Activated CD4-positive, alpha-beta memory T cell treated with anti-CD3 and anti-CD28 coated beads for 36 hours (primary cell): ENCODE measurements at regions of chr5 and their contacts with region 1.

Region 1: DNA sequence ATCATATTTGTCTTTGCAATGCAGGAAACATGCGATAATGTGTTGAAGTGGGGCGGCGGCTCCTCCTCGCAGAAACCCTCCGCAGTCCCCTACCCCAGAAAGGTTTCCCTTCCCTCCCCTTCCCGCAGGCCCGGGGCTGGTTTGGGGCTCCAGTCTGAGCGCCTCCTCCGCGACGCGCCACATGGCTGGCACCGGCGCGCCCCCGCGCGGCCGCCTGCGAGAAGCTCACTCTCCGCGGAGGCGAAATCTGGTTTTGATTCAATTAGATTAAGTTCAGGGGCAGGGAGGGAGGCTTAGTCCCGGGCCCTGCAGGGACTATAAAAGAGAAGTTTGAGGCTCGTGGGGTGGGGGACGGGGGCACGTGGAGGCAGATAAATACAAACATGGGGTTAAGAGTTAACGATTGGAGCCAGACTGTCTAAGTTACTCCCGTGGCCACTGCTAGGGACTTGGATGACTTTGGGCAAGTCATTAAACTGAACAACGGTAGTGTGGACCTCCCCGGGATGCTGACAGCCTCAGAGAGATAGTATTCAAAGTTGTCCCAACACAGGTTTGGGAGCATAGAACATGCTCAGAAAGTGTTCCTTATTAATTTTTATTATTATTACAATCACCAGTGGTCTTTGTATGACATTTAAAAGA is 69.4 kb downstream of the MSX2 start:
- DNase-seq: peak; percentile 69
- H3K4me3 Mint-ChIP-seq: no peak overlapping the region
- H3K27ac Mint-ChIP-seq: no peak overlapping the region
- H3K4me1 Mint-ChIP-seq: peaks cover 12% of the 10 kb centered on the region
- H3K27me3 Mint-ChIP-seq: peaks cover 48% of the 10 kb centered on the region

Region 2: GRCh38 chr5:174777583-174777982 is 16.2 kb before region 1 on chr5:
- CTCF ChIA-PET with region 1: interaction called, 13 read pairs
- POLR2A ChIA-PET with region 1: no interaction called
- intact Hi-C with region 1: no loop called
- DNase-seq: no peak
- H3K4me3 Mint-ChIP-seq: no peak overlapping the region
- H3K27ac Mint-ChIP-seq: no peak overlapping the region
- H3K4me1 Mint-ChIP-seq: no peaks in the 10 kb centered on the region
- H3K27me3 Mint-ChIP-seq: peaks cover 20% of the 10 kb centered on the region